ENCODE measurements at regions of chr4 and their contacts with region 1.

Region 1: GRCh38 chr4:17636696-17637622 is 22.5 kb downstream of the MED28 start:
- DNase-seq: peak; percentile 80
- H3K4me3 Mint-ChIP-seq: no peak overlapping the region
- H3K27ac Mint-ChIP-seq: no peak overlapping the region
- H3K4me1 Mint-ChIP-seq: no peaks in the 10 kb centered on the region
- H3K27me3 Mint-ChIP-seq: no peaks in the 10 kb centered on the region
- CTCF ChIP-seq: peak; percentile 79

Region 2: GRCh38 chr4:17554568-17554967 is 82.4 kb before region 1 on chr4:
- CTCF ChIA-PET with region 1: interaction called, 24 read pairs
- POLR2A ChIA-PET with region 1: no interaction called
- intact Hi-C with region 1: loop called (anchors 1 kb)
- DNase-seq: no peak
- H3K4me3 Mint-ChIP-seq: no peak overlapping the region
- H3K27ac Mint-ChIP-seq: no peak overlapping the region
- H3K4me1 Mint-ChIP-seq: no peaks in the 10 kb centered on the region
- H3K27me3 Mint-ChIP-seq: no peaks in the 10 kb centered on the region
- CTCF ChIP-seq: no peak